Sigmoid colon (tissue), 7 donors: ENCODE measurements at regions of chr14 and their contacts with region 1.

Region 1: GRCh38 chr14:93206793-93207467 is at the starts of genes GON7 and UBR7:
- DNase-seq: peak; percentile 97
- H3K4me3 ChIP-seq: peak within 1 kb of the TSS; percentile 65 to 90 (median 86)
- H3K27ac ChIP-seq: peak within 1 kb of the TSS; percentile 87 to 94 (median 88)
- H3K4me1 ChIP-seq: peaks cover 0 to 40% (median 33%) of the 10 kb centered on the region in 4 donors
- H3K27me3 ChIP-seq: no peaks in the 10 kb centered on the region
- CTCF ChIP-seq: no peak
- EP300 ChIP-seq: peak in 1 of 4 donors; percentile 66
- POLR2A ChIP-seq: peak; percentile 41 to 55
- total RNA-seq, gene GON7: 8.6 to 20.2 (median 11.8) TPM
- total RNA-seq, gene UBR7: 15.5 to 32.1 (median 27.2) TPM

Region 2: GRCh38 chr14:93184388-93185353 is 22.3 kb before region 1 on chr14 and contains the starts of genes LYSET and MOAP1:
- intact Hi-C with region 1: loop called (anchors 1 kb)
- DNase-seq: peak; percentile 94
- H3K4me3 ChIP-seq: peak within 1 kb of the TSS; percentile 89 to 99 (median 92)
- H3K27ac ChIP-seq: peak within 1 kb of the TSS; percentile 95 to 97 (median 96)
- H3K4me1 ChIP-seq: peaks cover 0 to 35% (median 31%) of the 10 kb centered on the region in 4 donors
- H3K27me3 ChIP-seq: no peaks in the 10 kb centered on the region
- CTCF ChIP-seq: peak in 2 of 4 experiments; percentile 24 to 34
- EP300 ChIP-seq: no peak
- POLR2A ChIP-seq: peak; percentile 65 to 74
- total RNA-seq, gene LYSET: 10.0 to 16.9 (median 11.6) TPM
- total RNA-seq, gene MOAP1: 31.3 to 65.3 (median 60.1) TPM

Region 3: GRCh38 chr14:93316479-93317080 is 109.7 kb after region 1 on chr14:
- intact Hi-C with region 1: no loop called
- DNase-seq: no peak
- H3K4me3 ChIP-seq: no peak overlapping the region
- H3K27ac ChIP-seq: peak overlapping the region in 1 of 4 donors; percentile 40
- H3K4me1 ChIP-seq: peaks cover 0 to 50% (median 34%) of the 10 kb centered on the region in 4 donors
- H3K27me3 ChIP-seq: no peaks in the 10 kb centered on the region
- CTCF ChIP-seq: no peak
- EP300 ChIP-seq: no peak
- POLR2A ChIP-seq: no peak

Region 4: GRCh38 chr14:93332853-93333630 is 126.1 kb after region 1 on chr14 and contains the start of gene BTBD7:
- intact Hi-C with region 1: loop called (anchors 1 kb)
- DNase-seq: peak; percentile 97
- H3K4me3 ChIP-seq: peak within 1 kb of the TSS; percentile 60 to 97 (median 90)
- H3K27ac ChIP-seq: peak within 1 kb of the TSS; percentile 96 to 99 (median 98)
- H3K4me1 ChIP-seq: peaks cover 0 to 39% (median 24%) of the 10 kb centered on the region in 4 donors
- H3K27me3 ChIP-seq: no peaks in the 10 kb centered on the region
- CTCF ChIP-seq: peak in 1 of 4 experiments; percentile 26
- EP300 ChIP-seq: no peak
- POLR2A ChIP-seq: no peak
- total RNA-seq, gene BTBD7: 30.3 to 50.7 (median 43.3) TPM

Region 5: DNA sequence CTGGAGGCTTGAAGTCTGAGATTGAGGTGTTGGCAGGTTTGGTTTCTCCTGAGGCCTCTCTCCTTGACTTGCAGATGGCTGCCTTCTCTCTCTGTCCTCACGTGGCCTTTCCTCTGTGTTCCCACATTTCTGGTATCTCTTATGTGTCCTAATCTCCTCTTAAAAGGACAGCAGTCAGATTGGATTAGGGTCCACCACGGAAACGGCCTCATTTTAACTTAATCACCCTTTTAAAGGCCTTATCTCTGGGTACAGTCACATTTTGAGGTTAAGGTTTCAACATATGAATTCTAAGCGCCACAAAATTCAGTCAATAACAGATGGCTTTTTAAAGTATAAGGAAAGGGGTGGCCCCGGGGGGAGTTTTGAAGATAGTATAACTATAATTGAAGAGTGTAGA is 257.3 kb after region 1 on chr14:
- intact Hi-C with region 1: no loop called
- DNase-seq: no peak
- H3K4me3 ChIP-seq: no peak overlapping the region
- H3K27ac ChIP-seq: no peak overlapping the region
- H3K4me1 ChIP-seq: no peaks in the 10 kb centered on the region
- H3K27me3 ChIP-seq: no peaks in the 10 kb centered on the region
- CTCF ChIP-seq: no peak
- EP300 ChIP-seq: no peak
- POLR2A ChIP-seq: no peak

Region 6: GRCh38 chr14:93619176-93619793 is 412.4 kb after region 1 on chr14:
- intact Hi-C with region 1: loop called (anchors 5 kb)
- DNase-seq: no peak
- H3K4me3 ChIP-seq: no peak overlapping the region
- H3K27ac ChIP-seq: no peak overlapping the region
- H3K4me1 ChIP-seq: peaks cover 0 to 5% (median 0%) of the 10 kb centered on the region in 4 donors
- H3K27me3 ChIP-seq: no peaks in the 10 kb centered on the region
- CTCF ChIP-seq: peak in 3 of 4 experiments; percentile 11 to 26 (median 25)
- EP300 ChIP-seq: no peak
- POLR2A ChIP-seq: no peak

Region 7: DNA sequence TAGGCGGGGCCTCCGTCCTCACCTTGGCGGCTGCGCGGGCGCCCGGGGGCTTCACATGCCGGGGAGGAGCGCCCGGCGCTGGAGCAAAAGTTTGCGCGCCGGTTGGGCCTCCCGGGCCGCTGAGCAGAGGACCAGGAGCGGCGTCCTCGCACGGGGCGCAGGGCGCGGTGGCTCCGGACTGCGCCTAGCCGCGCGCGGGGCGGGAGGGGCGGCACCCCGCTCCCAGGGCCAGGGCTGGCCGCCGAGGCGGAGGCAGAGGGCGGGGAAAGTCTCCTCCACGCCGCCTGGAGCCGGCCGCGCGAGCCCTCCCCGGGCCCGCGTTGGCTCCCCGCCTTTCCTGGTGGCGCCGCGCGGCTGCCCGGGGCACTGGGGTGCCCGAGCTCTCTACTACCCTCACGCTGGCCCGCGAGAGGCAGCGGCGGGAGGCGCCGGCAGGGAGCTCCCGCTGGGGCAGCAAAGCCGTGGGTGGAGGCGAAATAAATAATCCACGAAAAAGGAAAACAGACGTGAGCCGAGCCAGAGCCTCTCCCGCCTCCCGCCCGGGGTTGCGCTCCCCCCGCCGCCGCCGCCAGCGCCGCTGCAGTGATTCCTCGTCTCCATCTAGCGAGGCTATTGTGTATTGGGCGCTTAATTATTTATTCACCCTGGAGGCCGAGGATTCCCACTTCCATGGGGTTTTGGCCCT is 581.8 kb after region 1 on chr14:
- intact Hi-C with region 1: loop called (anchors 10 kb)
- DNase-seq: peak; percentile 88
- H3K4me3 ChIP-seq: peak overlapping the region; percentile 62 to 80 (median 70)
- H3K27ac ChIP-seq: peak overlapping the region; percentile 76 to 90 (median 90)
- H3K4me1 ChIP-seq: peaks cover 0 to 56% (median 37%) of the 10 kb centered on the region in 4 donors
- H3K27me3 ChIP-seq: no peaks in the 10 kb centered on the region
- CTCF ChIP-seq: peak; percentile 15 to 64 (median 53)
- EP300 ChIP-seq: no peak
- POLR2A ChIP-seq: no peak